Activated naive CD4-positive, alpha-beta T cell treated with anti-CD3 and anti-CD28 coated beads, Interleukin-2, amount 10 ng/mL, durations not matched to agents 7 days and 5 days (primary cell): ENCODE measurements at regions of chr15 and their contacts with region 1.

Region 1: DNA sequence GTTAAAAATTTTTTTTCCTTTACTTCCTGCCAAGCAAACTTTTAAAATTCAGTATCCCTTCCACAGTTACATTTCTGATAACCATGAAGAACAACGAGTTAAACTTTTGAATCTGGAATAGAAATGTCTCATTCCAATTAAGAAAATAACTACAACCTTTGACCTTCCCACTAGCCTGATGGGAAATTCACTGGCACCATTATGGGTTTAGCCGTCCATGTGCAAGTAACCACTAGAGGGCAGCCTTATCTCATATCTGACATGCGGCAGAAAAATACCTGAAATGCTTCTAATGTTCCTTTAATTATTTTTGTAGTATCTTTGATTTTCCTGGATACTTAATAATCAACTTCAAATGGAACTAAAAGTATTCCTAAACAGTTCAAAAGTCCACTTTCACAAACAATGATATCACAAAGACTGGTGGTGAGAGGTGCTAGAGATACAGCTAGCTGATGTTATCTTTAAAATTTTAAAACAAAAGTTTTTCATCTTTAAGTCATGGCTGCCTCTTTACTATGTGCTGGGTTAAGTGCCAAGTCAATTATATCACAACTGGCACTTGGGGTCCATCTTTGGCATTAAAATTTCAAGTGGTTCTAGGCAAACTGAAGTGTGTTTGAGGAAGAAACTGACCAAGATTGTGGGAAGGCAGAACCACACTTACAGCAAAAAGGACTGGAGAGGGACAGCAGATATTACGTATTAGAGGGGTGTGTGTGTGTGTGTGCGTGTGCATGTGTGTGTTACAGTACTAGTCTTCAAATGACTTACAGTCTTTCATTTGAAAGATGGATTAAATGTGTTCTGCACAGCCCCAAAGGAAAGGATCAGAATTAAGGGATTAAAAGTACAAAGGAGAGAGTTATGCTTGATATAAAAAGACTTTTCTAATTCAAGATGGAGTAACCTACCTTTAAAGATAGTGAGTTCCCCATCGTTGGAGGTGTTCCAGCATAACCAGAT is 107.1 kb upstream of the ICE2 start:
- DNase-seq: peak; percentile 72
- H3K4me3 Mint-ChIP-seq: peak overlapping the region; percentile 44
- H3K27ac Mint-ChIP-seq: peak overlapping the region; percentile 98
- H3K4me1 Mint-ChIP-seq: peaks cover 88% of the 10 kb centered on the region
- H3K27me3 Mint-ChIP-seq: no peaks in the 10 kb centered on the region

Region 2: DNA sequence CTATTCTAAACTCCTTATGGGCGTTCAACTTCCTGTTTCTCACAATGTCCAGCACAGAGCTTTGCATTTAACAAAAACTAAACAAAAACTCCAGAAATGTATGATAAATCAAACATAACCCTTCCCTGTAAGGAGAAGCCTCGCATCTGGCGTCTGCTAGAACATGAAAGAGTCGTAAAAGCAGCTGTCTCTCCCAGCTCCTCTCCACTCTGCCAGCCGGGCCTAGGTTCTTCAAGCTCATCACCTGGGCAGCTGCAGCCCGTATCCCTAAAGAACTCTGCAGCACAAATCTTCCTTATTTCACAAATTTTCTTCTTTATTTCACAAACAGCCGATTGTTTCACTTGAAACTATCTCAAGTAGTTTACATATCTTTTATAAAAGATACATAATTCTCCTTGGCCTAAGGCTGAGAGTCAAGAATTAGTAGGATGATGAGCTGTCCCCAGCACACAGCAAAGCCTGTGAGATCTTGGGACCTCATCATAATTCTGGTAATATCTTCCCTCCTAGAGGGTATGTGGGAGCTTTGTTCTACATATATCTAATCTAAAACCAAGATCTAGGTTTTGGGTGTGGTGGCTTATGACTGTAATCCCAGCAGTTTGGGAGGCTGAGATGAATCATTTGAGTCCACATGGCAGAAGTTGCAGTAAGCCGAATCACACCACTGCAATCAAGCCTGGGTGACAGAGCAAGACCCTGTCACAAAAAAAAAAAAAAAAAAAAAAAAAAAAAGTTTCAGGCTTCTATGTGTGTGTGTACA is 223.5 kb before region 1 on chr15:
- CTCF ChIA-PET with region 1: interaction called, 11 read pairs
- DNase-seq: peak; percentile 48
- H3K4me3 Mint-ChIP-seq: no peak overlapping the region
- H3K27ac Mint-ChIP-seq: peak overlapping the region; percentile 80
- H3K4me1 Mint-ChIP-seq: peaks cover 33% of the 10 kb centered on the region
- H3K27me3 Mint-ChIP-seq: no peaks in the 10 kb centered on the region

Region 3: DNA sequence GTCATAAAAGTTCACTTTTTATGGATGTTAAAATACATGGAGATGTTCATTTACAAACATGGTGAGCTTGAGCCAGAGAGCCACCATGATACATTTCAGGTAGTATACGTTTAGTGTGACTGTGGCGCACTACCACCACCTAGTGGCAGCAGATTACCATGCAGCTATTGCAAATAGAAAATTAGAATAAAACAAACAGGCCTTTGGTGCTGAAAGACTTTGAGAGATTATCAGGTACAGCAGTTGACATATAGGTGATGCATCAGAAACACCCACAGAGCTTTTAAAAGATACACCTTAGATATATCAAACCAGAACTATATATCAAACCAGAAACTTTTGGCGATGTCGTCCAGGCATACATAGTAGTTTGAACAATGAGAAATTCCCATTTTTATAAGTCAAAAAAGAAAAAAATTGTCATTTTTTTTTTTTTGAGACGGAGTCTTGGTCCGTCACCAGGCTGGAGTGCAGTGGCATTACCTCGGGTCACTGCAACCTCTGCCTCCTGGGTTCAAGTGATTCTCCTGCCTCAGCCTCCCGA is 65.1 kb before region 1 on chr15:
- CTCF ChIA-PET with region 1: interaction called, 17 read pairs
- DNase-seq: peak; percentile 87
- H3K4me3 Mint-ChIP-seq: no peak overlapping the region
- H3K27ac Mint-ChIP-seq: peak overlapping the region; percentile 2
- H3K4me1 Mint-ChIP-seq: peaks cover 30% of the 10 kb centered on the region
- H3K27me3 Mint-ChIP-seq: no peaks in the 10 kb centered on the region

Region 4: DNA sequence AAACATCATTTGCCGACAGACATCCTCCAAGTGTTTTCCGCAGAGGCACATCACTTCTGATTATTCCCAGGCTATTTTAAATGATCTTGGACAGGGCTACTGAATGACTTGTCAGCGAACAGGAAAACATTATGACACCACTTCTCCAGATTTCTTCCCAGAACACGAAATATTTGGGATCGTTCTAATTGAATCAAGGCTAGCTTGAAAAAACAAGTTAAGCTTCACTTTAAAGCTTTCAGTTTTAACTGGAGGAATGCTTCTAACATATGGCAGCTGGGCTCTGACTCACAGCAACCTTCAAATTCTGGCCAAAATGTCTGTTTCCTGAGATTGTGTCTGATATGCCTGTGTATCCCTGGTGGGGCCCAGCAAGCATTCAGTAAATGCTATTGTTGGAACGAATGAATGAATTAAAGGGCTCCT is 19.9 kb after region 1 on chr15:
- CTCF ChIA-PET with region 1: no interaction called
- DNase-seq: no peak
- H3K4me3 Mint-ChIP-seq: no peak overlapping the region
- H3K27ac Mint-ChIP-seq: no peak overlapping the region
- H3K4me1 Mint-ChIP-seq: peaks cover 16% of the 10 kb centered on the region
- H3K27me3 Mint-ChIP-seq: peaks cover 13% of the 10 kb centered on the region

Region 5: DNA sequence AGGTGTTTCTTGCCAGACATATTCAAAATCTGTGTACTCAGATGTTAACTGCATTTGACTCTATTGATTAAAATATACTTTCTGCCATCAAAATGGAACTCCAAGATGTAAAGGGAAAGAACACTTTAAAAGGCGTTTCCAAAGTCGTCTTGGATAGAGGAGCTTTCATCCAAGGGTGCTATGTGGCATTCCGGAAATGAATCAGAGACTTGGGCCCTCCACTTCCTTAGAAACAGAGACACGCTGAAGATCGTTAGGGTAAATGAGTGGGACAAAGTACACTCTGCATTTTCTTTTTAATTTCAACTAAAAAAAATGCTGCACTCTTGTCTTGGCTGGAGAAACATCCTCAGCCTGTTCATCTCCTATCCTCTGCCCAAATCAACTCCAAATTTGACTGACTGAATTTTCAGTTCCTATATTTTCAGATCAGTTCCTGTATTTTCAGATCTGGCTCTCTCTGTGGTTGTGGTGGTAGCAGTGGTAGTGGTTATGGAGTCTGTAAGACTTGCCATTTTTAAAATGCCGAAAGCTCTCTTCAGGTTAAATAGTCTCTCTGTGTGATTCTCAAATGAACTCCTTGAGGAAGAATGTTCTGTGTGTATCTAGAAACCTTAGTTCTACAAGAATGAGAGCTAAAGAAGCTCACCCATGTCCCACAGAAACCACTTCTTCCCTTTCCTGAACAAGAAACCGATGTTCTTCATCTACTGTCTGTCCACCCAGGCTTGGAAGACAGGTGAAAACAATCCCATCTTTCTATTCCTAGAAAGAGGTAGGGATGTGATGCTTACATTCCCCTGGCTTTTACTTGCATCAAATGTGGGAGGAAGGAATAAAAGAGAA is 49.7 kb after region 1 on chr15:
- CTCF ChIA-PET with region 1: no interaction called
- DNase-seq: no peak
- H3K4me3 Mint-ChIP-seq: no peak overlapping the region
- H3K27ac Mint-ChIP-seq: no peak overlapping the region
- H3K4me1 Mint-ChIP-seq: peaks cover 4% of the 10 kb centered on the region
- H3K27me3 Mint-ChIP-seq: peaks cover 18% of the 10 kb centered on the region

Region 6: GRCh38 chr15:60649845-60650548 is 64.0 kb after region 1 on chr15:
- CTCF ChIA-PET with region 1: interaction called, 28 read pairs
- DNase-seq: peak; percentile 68
- H3K4me3 Mint-ChIP-seq: peak overlapping the region; percentile 69
- H3K27ac Mint-ChIP-seq: peak overlapping the region; percentile 80
- H3K4me1 Mint-ChIP-seq: peaks cover 49% of the 10 kb centered on the region
- H3K27me3 Mint-ChIP-seq: peaks cover 3% of the 10 kb centered on the region

Region 7: GRCh38 chr15:60932051-60932915 is 346.3 kb after region 1 on chr15:
- CTCF ChIA-PET with region 1: interaction called, 36 read pairs
- DNase-seq: peak; percentile 54
- H3K4me3 Mint-ChIP-seq: no peak overlapping the region
- H3K27ac Mint-ChIP-seq: no peak overlapping the region
- H3K4me1 Mint-ChIP-seq: peaks cover 12% of the 10 kb centered on the region
- H3K27me3 Mint-ChIP-seq: peaks cover 46% of the 10 kb centered on the region